Calu3 (cell line): ENCODE measurements at regions of chr16 and their contacts with region 1.

Region 1: GRCh38 chr16:13919683-13920509 is at the start of gene ERCC4:
- DNase-seq: peak; percentile 99
- H3K4me3 Mint-ChIP-seq: peak within 1 kb of the TSS; percentile 100
- H3K27ac Mint-ChIP-seq: peak within 1 kb of the TSS; percentile 92
- H3K4me1 Mint-ChIP-seq: peaks cover 25% of the 10 kb centered on the region
- H3K27me3 Mint-ChIP-seq: peaks cover 16% of the 10 kb centered on the region
- CTCF ChIP-seq: peak; percentile 95
- total RNA-seq, gene ERCC4: 19.7 and 21.1 TPM in 2 replicates

Region 2: DNA sequence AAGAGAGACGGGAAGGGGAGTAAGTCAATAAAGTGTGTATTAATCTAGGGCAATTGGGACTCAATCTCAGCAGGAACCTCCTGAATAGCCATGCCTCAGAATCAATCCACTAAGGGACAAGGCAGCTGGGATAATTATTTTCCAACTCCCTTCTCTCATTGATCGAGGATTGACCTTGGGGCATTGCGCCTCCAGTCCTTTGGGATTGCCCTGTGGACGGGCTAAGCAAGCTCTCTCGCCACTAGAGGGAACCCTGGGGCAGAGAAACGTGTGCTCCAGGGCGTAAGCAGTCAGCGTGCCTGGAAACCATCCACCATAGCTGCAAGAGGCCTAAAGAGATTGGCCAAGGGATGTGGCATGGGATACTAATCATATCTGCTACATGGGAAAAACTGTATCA is 53.8 kb before region 1 on chr16:
- CTCF ChIA-PET with region 1: interaction called, 10 read pairs
- intact Hi-C with region 1: loop called (anchors 1 kb)
- DNase-seq: peak; percentile 89
- H3K4me3 Mint-ChIP-seq: no peak overlapping the region
- H3K27ac Mint-ChIP-seq: no peak overlapping the region
- H3K4me1 Mint-ChIP-seq: peaks cover 8% of the 10 kb centered on the region
- H3K27me3 Mint-ChIP-seq: peaks cover 40% of the 10 kb centered on the region
- CTCF ChIP-seq: peak; percentile 82

Region 3: GRCh38 chr16:13940397-13940933 is 20.6 kb after region 1 on chr16:
- CTCF ChIA-PET with region 1: no interaction called
- intact Hi-C with region 1: no loop called
- DNase-seq: no peak
- H3K4me3 Mint-ChIP-seq: no peak overlapping the region
- H3K27ac Mint-ChIP-seq: no peak overlapping the region
- H3K4me1 Mint-ChIP-seq: no peaks in the 10 kb centered on the region
- H3K27me3 Mint-ChIP-seq: no peaks in the 10 kb centered on the region
- CTCF ChIP-seq: no peak

Region 4: DNA sequence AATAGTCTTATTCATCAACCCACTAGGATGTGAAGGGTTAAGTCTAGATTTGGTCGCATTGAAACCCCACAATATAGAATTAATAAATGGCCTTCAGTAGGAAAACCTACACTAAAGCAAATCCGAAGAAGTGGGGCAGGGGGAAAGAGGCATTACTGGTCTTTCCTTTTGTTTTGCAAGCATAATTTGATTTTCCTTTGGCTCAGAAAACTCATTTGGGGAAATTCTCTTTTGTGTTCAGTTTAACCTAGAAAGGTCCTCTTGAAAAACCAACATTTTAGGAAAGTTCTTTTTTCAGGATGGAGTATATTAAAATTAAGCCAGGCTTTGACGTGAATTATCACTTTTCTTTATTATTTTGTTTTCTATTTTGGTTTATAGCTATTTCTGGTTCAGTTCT is 31.7 kb after region 1 on chr16:
- CTCF ChIA-PET with region 1: no interaction called
- intact Hi-C with region 1: no loop called
- DNase-seq: no peak
- H3K4me3 Mint-ChIP-seq: no peak overlapping the region
- H3K27ac Mint-ChIP-seq: no peak overlapping the region
- H3K4me1 Mint-ChIP-seq: peaks cover 24% of the 10 kb centered on the region
- H3K27me3 Mint-ChIP-seq: no peaks in the 10 kb centered on the region
- CTCF ChIP-seq: no peak

Region 5: DNA sequence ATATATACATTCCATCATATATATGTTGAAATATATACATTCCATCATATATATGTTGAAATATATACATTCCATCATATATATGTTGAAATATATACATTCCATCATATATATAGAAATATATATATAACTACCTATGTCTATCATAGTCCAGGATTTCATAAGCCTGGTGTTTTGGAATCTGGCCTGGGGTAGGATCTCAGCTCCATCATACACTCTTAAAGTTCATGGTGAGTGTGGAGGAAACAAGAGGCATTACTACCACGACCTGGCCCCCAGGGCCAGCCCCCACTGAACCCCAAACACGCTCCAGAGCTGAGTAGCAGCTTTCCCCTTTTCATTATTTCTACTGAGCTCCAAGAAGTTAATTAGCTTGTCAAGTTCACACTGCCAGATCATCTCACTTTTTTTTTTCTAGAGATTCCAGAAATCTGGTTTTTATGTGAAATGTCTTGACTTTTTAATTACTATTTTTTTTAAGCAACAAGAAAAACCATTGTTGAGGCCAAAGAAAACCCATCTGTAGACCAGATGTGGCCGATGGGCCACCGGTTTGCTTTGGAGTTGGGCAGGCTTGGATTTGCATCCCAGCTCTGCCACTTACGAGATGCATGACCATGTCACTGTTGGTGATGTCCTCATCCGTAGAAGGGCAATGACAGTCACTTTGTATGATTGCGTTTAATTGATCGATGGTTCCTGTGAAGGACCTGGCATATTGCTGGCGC is 116.8 kb after region 1 on chr16:
- CTCF ChIA-PET with region 1: no interaction called
- intact Hi-C with region 1: no loop called
- DNase-seq: no peak
- H3K4me3 Mint-ChIP-seq: no peak overlapping the region
- H3K27ac Mint-ChIP-seq: no peak overlapping the region
- H3K4me1 Mint-ChIP-seq: no peaks in the 10 kb centered on the region
- H3K27me3 Mint-ChIP-seq: no peaks in the 10 kb centered on the region
- CTCF ChIP-seq: no peak

Region 6: DNA sequence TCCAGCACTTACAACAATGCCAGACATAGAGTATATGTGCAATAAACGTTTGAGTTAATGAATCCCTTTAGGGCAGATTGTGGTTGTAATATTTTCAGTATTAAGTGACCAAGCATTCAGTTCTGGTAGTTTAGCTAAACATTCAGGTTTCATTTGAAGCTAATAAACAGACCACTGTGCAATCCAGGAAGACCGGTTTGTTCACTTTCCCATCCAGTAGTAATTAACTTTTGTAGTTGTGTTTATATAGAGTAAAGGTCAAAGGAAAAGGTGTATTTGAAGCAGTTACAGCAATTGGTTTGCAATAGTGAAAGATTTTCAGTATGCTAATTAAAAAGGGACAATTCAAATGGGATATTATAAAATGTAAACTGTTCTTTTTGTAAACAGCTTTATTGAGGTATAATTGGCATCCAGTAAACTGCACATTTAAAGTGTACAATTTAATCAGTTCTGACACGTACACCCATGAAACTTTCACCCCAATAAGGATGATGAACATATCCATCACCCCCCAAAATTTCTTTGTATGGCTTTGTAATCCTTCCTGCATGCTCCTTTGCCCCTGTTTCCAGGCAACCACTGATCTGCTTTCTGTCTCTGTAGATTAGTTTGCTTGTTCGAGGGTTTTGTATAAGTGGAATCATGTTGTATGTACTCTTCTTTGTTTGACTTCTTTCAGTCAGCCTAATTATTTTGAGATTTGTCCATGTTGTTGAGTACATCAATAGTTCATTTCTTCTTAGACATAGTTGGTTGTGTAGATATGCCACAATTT is 177.5 kb after region 1 on chr16:
- CTCF ChIA-PET with region 1: interaction called, 9 read pairs
- intact Hi-C with region 1: loop called (anchors 5 kb)
- DNase-seq: peak; percentile 76
- H3K4me3 Mint-ChIP-seq: peak overlapping the region; percentile 67
- H3K27ac Mint-ChIP-seq: peak overlapping the region; percentile 99
- H3K4me1 Mint-ChIP-seq: peaks cover 68% of the 10 kb centered on the region
- H3K27me3 Mint-ChIP-seq: no peaks in the 10 kb centered on the region
- CTCF ChIP-seq: no peak

Region 7: GRCh38 chr16:14249291-14250032 is 329.6 kb after region 1 on chr16:
- CTCF ChIA-PET with region 1: interaction called, 3 read pairs
- intact Hi-C with region 1: loop called (anchors 5 kb)
- DNase-seq: peak; percentile 54
- H3K4me3 Mint-ChIP-seq: no peak overlapping the region
- H3K27ac Mint-ChIP-seq: peak overlapping the region; percentile 47
- H3K4me1 Mint-ChIP-seq: no peaks in the 10 kb centered on the region
- H3K27me3 Mint-ChIP-seq: no peaks in the 10 kb centered on the region
- CTCF ChIP-seq: peak; percentile 86

Region 8: GRCh38 chr16:14529010-14529669 is 609.2 kb after region 1 on chr16:
- CTCF ChIA-PET with region 1: no interaction called
- intact Hi-C with region 1: loop called (anchors 10 kb)
- DNase-seq: peak; percentile 84
- H3K4me3 Mint-ChIP-seq: peak overlapping the region; percentile 27
- H3K27ac Mint-ChIP-seq: no peak overlapping the region
- H3K4me1 Mint-ChIP-seq: peaks cover 27% of the 10 kb centered on the region
- H3K27me3 Mint-ChIP-seq: no peaks in the 10 kb centered on the region
- CTCF ChIP-seq: peak; percentile 75